Ovary (tissue), 10 donors: ENCODE measurements at regions of chr2 and their contacts with region 1.

Region 1: GRCh38 chr2:27509326-27509725 is 12.7 kb downstream of the GCKR start:
- DNase-seq: no peak
- H3K4me3 ChIP-seq: no peak overlapping the region
- H3K27ac ChIP-seq: no peak overlapping the region
- H3K4me1 ChIP-seq: no peaks in the 10 kb centered on the region
- H3K27me3 ChIP-seq: no peaks in the 10 kb centered on the region
- CTCF ChIP-seq: no peak
- EP300 ChIP-seq: no peak
- POLR2A ChIP-seq: no peak

Region 2: DNA sequence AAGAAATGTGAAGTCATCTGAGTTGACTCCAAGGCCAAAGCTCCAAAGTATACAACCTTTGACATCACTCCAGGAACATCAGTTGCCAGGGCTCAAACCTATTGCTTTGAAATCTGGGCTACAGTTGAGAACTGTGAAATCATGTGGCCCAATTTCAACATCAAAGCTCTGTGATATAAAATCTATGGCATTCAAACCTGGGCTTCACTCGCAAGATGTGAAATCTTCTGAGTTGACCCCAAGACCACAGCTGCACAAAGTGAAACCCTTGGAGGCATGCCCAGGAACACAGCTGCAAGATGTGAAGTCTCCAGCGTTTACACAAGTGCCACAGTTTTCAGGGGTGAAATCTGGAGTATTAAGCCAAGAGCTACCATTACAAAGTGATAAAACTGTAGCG is 64.1 kb after region 1 on chr2:
- intact Hi-C with region 1: loop called in 1 of 4 experiments (anchors 10 kb)
- DNase-seq: no peak
- H3K4me3 ChIP-seq: no peak overlapping the region
- H3K27ac ChIP-seq: no peak overlapping the region
- H3K4me1 ChIP-seq: no peaks in the 10 kb centered on the region
- H3K27me3 ChIP-seq: no peaks in the 10 kb centered on the region
- CTCF ChIP-seq: no peak
- EP300 ChIP-seq: no peak
- POLR2A ChIP-seq: no peak

Region 3: DNA sequence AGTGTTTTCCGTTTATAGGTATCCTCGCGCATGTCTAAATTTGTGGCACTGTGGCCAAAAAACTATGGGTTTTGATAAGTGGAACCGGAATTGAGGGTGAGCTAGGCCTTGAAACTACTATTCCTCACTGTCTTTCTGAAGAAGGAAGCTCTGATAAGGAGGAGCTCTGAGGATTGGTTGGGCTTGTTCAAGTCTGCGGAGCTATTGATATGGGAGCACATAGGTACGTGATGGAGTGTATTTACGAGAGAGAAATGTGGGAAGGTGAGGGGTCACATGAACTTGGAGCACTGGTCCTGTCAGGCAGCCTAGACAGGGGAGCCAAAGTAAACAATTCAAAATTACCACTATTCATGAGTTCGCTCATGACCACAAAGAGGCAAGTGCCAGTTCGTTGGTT is 512.6 kb after region 1 on chr2:
- intact Hi-C with region 1: no loop called
- DNase-seq: no peak
- H3K4me3 ChIP-seq: no peak overlapping the region
- H3K27ac ChIP-seq: no peak overlapping the region
- H3K4me1 ChIP-seq: no peaks in the 10 kb centered on the region
- H3K27me3 ChIP-seq: no peaks in the 10 kb centered on the region
- CTCF ChIP-seq: no peak
- EP300 ChIP-seq: no peak
- POLR2A ChIP-seq: no peak